Transverse colon (tissue), 4 donors: ENCODE measurements at regions of chr1 and their contacts with region 1.

Region 1: DNA sequence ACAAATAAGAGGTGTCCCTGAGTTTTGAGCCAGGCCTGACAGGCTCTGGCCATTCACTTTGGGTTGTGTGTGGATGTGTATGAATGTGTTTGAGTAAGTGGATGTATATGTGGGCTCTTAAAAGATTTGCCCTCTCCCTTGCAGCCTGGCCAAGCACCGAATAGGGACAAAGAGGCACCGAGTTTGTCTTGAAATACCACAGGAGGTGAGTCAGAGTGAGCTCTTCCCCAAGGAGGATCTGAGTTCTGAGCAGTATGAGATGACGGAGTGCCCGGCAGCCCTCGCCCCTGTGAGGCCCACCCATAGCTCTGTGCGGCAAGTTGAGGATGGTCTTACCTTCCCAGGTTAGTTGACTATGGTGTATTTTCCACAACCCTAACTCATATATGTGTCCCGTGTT is 19.0 kb downstream of the KDM4A start:
- DNase-seq: no peak
- H3K4me3 ChIP-seq: no peak overlapping the region
- H3K27ac ChIP-seq: no peak overlapping the region
- H3K4me1 ChIP-seq: no peaks in the 10 kb centered on the region
- H3K27me3 ChIP-seq: no peaks in the 10 kb centered on the region
- CTCF ChIP-seq: no peak
- EP300 ChIP-seq: no peak
- POLR2A ChIP-seq: no peak

Region 2: GRCh38 chr1:42541104-42541503 is 1127.9 kb before region 1 on chr1:
- in situ Hi-C with region 1: no loop called
- intact Hi-C with region 1: loop called (anchors 5 kb)
- DNase-seq: no peak
- H3K4me3 ChIP-seq: no peak overlapping the region
- H3K27ac ChIP-seq: no peak overlapping the region
- H3K4me1 ChIP-seq: no peaks in the 10 kb centered on the region
- H3K27me3 ChIP-seq: no peaks in the 10 kb centered on the region
- CTCF ChIP-seq: no peak
- EP300 ChIP-seq: no peak
- POLR2A ChIP-seq: no peak